ENCODE measurements at regions of chr4 and their contacts with region 1.

Region 1: GRCh38 chr4:183504064-183504929 is 561 bp upstream of the ING2 start:
- DNase-seq: peak; percentile 99
- H3K4me3 ChIP-seq: peak overlapping the region; percentile 73 to 96 (median 92)
- H3K27ac ChIP-seq: peak overlapping the region; percentile 96 to 98 (median 97)
- H3K4me1 ChIP-seq: peaks cover 0 to 19% (median 14%) of the 10 kb centered on the region in 4 donors
- H3K27me3 ChIP-seq: no peaks in the 10 kb centered on the region
- CTCF ChIP-seq: no peak
- EP300 ChIP-seq: no peak
- POLR2A ChIP-seq: peak in 1 of 2 donors; percentile 65

Region 2: GRCh38 chr4:181821039-181822004 is 1683.0 kb before region 1 on chr4:
- intact Hi-C with region 1: no loop called
- DNase-seq: no peak
- H3K4me3 ChIP-seq: no peak overlapping the region
- H3K27ac ChIP-seq: no peak overlapping the region
- H3K4me1 ChIP-seq: no peaks in the 10 kb centered on the region
- H3K27me3 ChIP-seq: no peaks in the 10 kb centered on the region
- CTCF ChIP-seq: no peak
- EP300 ChIP-seq: no peak
- POLR2A ChIP-seq: no peak

Region 3: GRCh38 chr4:182770259-182770995 is 733.9 kb before region 1 on chr4:
- intact Hi-C with region 1: no loop called
- DNase-seq: no peak
- H3K4me3 ChIP-seq: no peak overlapping the region
- H3K27ac ChIP-seq: no peak overlapping the region
- H3K4me1 ChIP-seq: peaks cover 0 to 16% (median 11%) of the 10 kb centered on the region in 4 donors
- H3K27me3 ChIP-seq: no peaks in the 10 kb centered on the region
- CTCF ChIP-seq: no peak
- EP300 ChIP-seq: no peak
- POLR2A ChIP-seq: no peak

Region 4: GRCh38 chr4:183444214-183445066 is 59.9 kb before region 1 on chr4 and contains the start of gene CDKN2AIP:
- intact Hi-C with region 1: loop called (anchors 1 kb)
- DNase-seq: peak; percentile 96
- H3K4me3 ChIP-seq: peak within 1 kb of the TSS; percentile 85 to 95 (median 93)
- H3K27ac ChIP-seq: peak within 1 kb of the TSS; percentile 97 to 99 (median 98)
- H3K4me1 ChIP-seq: peaks cover 0 to 51% (median 37%) of the 10 kb centered on the region in 4 donors
- H3K27me3 ChIP-seq: no peaks in the 10 kb centered on the region
- CTCF ChIP-seq: peak in 1 of 4 experiments; percentile 4
- EP300 ChIP-seq: peak in 1 of 4 donors; percentile 1
- POLR2A ChIP-seq: peak; percentile 90 to 93
- total RNA-seq, gene CDKN2AIP: 17.7 to 35.0 (median 27.4) TPM

Region 5: GRCh38 chr4:183602557-183603027 is 98.3 kb after region 1 on chr4:
- intact Hi-C with region 1: loop called (anchors 2 kb)
- DNase-seq: no peak
- H3K4me3 ChIP-seq: no peak overlapping the region
- H3K27ac ChIP-seq: peak overlapping the region in 1 of 4 donors; percentile 17
- H3K4me1 ChIP-seq: no peaks in the 10 kb centered on the region
- H3K27me3 ChIP-seq: no peaks in the 10 kb centered on the region
- CTCF ChIP-seq: peak in 2 of 4 experiments; percentile 12 to 22
- EP300 ChIP-seq: no peak
- POLR2A ChIP-seq: no peak

Region 6: DNA sequence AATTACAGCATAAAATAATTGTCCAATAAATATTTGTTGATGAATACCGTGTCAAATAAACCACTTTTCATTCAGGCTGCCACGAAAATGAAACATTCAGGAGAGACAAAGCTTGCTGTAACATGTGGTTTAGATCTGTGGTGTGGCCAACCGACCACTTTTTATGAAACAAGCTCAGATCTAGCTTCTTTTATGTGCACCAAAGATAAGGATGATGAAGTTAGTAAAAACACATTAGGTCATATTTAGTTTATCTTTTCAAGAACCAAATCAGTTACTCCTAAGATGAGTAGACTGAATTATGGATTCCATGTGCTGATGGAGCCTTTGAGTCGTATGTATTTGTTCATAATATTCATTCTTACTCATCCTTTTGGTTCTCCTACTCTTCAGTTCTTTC is 436.6 kb after region 1 on chr4:
- intact Hi-C with region 1: no loop called
- DNase-seq: no peak
- H3K4me3 ChIP-seq: no peak overlapping the region
- H3K27ac ChIP-seq: no peak overlapping the region
- H3K4me1 ChIP-seq: no peaks in the 10 kb centered on the region
- H3K27me3 ChIP-seq: no peaks in the 10 kb centered on the region
- CTCF ChIP-seq: no peak
- EP300 ChIP-seq: no peak
- POLR2A ChIP-seq: no peak

Region 7: DNA sequence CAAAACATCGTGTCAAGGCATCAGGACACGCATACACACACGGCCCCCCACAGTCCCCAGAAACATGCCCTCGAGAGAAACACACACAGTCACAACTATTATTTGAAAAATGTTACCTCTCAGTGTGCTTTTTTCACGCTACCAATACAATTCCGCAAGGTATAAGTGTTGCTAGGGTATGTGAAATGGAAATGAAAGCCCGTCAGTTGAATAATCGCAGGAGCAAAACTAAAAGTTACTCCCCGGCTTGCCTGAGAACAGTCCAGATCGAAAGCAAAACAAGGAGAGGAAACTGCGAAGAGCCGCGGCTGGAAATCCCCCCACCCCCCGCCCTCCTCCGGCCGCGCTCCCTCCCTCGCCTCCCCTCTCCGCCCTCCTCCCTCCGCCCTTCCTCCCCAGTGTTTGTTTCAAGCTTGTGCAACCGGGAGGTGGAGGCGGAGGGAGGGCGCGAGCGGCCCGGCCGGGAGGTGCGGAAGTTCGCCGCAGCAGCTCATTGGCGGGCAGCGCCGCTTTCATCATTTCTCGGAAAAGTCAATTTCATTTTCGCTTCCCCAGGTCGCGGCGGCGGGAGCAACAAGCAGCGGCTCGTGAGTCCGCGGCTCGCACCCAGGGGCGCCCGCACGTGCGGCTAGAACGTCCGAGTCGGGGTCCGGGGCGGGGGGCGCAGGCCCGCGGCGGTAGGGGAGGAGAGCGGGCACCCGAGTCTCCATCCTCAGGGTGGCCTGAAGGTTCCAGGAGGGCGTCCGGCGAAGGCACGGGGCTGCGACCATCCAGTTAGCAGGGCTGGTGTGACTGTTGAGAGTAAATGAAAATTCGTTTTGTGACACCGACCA is 970.2 kb after region 1 on chr4 and contains the start of gene IRF2:
- intact Hi-C with region 1: loop called (anchors 10 kb)
- DNase-seq: peak; percentile 99
- H3K4me3 ChIP-seq: peak within 1 kb of the TSS; percentile 80 to 95 (median 88)
- H3K27ac ChIP-seq: peak within 1 kb of the TSS; percentile 93 to 99 (median 96)
- H3K4me1 ChIP-seq: peaks cover 0 to 45% (median 34%) of the 10 kb centered on the region in 4 donors
- H3K27me3 ChIP-seq: no peaks in the 10 kb centered on the region
- CTCF ChIP-seq: peak in 2 of 4 experiments; percentile 14 to 16
- EP300 ChIP-seq: peak in 3 of 4 donors; percentile 1 to 89 (median 68)
- POLR2A ChIP-seq: peak; percentile 87 to 91
- total RNA-seq, gene IRF2: 29.3 to 39.7 (median 31.3) TPM